PC-9 (cell line): ENCODE measurements at regions of chr12 and their contacts with region 1.

Region 1: DNA sequence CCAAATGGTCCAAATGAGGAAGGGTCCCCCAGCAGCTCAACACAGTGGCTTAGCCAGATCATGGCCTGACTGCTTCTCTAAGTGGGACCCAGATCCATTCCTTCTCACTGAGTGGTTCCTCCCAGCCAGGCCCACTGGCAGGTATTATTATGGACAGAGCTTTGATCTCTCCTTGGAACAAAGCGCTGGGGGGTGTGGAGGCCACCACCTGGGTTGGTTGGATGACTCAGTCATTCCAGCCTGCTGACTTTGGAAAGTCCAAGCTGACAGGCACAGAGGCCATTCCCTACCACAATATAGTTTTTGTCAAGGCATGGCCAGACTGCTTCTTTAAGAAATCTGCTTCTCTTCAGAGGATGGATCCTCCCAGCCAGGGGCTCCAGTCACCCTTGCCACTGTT is 341.1 kb downstream of the BTG1 start:
- DNase-seq: peak in 1 of 2 experiments; percentile 36
- H3K4me3 ChIP-seq: no peak overlapping the region
- H3K27ac ChIP-seq: no peak overlapping the region
- H3K4me1 ChIP-seq: no peaks in the 10 kb centered on the region
- H3K27me3 ChIP-seq: no peaks in the 10 kb centered on the region
- CTCF ChIP-seq: no peak

Region 2: DNA sequence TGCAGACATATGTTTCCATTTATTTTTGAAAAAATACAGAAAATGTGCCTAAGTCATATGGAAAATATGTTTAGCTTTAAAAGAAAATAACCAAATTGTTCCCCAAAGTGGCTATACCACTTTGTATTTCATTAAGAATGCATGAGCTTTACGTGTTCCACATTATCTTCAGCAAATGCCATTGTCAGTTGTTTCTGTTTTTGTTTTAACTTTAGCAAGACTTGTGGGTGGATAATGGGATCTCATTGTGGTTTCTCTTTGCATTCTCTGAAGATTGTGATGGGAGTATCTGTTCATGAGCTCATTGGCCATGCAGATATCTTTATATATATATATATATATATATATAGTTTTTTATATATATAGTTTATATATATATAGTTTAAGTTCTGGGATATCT is 1031.0 kb before region 1 on chr12:
- CTCF ChIA-PET with region 1: no interaction called
- POLR2A ChIA-PET with region 1: no interaction called
- intact Hi-C with region 1: no loop called
- DNase-seq: no peak
- H3K4me3 ChIP-seq: no peak overlapping the region
- H3K27ac ChIP-seq: no peak overlapping the region
- H3K4me1 ChIP-seq: no peaks in the 10 kb centered on the region
- H3K27me3 ChIP-seq: no peaks in the 10 kb centered on the region
- CTCF ChIP-seq: no peak

Region 3: GRCh38 chr12:91603060-91603459 is 201.5 kb before region 1 on chr12:
- CTCF ChIA-PET with region 1: no interaction called
- POLR2A ChIA-PET with region 1: no interaction called
- intact Hi-C with region 1: no loop called
- DNase-seq: no peak
- H3K4me3 ChIP-seq: no peak overlapping the region
- H3K27ac ChIP-seq: no peak overlapping the region
- H3K4me1 ChIP-seq: no peaks in the 10 kb centered on the region
- H3K27me3 ChIP-seq: no peaks in the 10 kb centered on the region
- CTCF ChIP-seq: no peak

Region 4: GRCh38 chr12:92537290-92537960 is 732.9 kb after region 1 on chr12:
- CTCF ChIA-PET with region 1: no interaction called
- POLR2A ChIA-PET with region 1: interaction called, 18 read pairs
- intact Hi-C with region 1: no loop called
- DNase-seq: no peak
- H3K4me3 ChIP-seq: no peak overlapping the region
- H3K27ac ChIP-seq: no peak overlapping the region
- H3K4me1 ChIP-seq: peaks cover 28% of the 10 kb centered on the region
- H3K27me3 ChIP-seq: no peaks in the 10 kb centered on the region
- CTCF ChIP-seq: no peak